Right ventricle myocardium inferior (tissue), 1 donor: ENCODE measurements at regions of chr1 and their contacts with region 1.

Region 1: GRCh38 chr1:171141688-171142415 is 43.2 kb upstream of the FMO2 start:
- DNase-seq: peak; percentile 64
- ATAC-seq: peak; percentile 78

Region 2: DNA sequence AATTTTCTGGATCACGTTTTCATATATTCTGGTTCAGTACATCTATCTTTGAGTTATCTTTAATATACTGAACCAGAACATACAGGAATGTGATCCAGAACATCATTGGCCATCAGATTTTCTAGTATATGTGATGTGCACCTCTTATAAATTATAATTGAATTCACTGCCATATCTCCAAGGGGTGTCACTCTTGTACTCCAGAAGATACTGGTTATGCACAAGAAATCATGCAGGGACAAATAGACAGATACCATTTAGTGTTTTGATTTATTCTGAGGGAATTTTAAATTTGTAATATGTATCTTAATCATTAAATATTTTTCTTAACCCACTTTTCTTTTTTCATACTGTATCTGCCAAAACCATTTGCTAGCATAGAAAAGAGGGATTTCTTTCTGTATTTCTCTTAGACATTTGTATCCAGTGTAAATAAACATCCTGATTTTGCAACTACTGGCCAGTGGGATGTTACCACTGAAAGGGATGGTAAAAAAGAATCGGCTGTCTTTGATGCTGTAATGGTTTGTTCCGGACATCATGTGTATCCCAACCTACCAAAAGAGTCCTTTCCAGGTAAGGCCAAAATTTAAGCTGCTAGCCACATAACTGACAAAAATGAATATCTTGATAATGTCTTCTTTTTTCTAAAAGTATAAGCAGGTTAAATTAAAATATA is 34.5 kb before region 1 on chr1:
- intact Hi-C with region 1: loop called (anchors 2 kb)
- DNase-seq: no peak
- ATAC-seq: peak; percentile 49

Region 3: DNA sequence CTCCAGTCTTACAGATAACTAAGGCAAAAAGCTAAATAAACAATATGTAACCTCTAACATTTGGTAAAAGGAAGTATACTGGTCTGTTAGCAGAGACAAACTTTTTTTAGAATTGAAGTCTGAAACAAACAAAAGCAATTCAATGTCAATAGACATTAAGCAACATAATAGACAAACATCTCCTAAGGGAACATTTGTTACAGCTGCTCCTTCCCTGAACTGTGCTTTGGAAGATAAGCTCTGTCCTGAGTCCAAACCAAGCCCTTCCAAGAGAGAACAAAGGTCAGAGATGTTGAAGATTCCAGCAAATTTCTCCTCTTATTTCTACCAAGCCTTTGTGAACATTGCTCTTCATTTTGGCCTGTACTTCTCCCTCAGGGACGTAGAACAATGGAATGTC is 68.5 kb after region 1 on chr1:
- intact Hi-C with region 1: loop called (anchors 5 kb)
- DNase-seq: no peak
- ATAC-seq: peak; percentile 79